ENCODE measurements at regions of chr6 and their contacts with region 1.

Region 1: GRCh38 chr6:47047479-47048407 is 5.6 kb upstream of the ADGRF1 start:
- DNase-seq: peak; percentile 97
- ATAC-seq: peak; percentile 57
- H3K4me3 ChIP-seq: no peak overlapping the region
- H3K27ac ChIP-seq: peak overlapping the region; percentile 95
- H3K4me1 ChIP-seq: peaks cover 54% of the 10 kb centered on the region
- H3K27me3 ChIP-seq: no peaks in the 10 kb centered on the region
- CTCF ChIP-seq: peak; percentile 94

Region 2: DNA sequence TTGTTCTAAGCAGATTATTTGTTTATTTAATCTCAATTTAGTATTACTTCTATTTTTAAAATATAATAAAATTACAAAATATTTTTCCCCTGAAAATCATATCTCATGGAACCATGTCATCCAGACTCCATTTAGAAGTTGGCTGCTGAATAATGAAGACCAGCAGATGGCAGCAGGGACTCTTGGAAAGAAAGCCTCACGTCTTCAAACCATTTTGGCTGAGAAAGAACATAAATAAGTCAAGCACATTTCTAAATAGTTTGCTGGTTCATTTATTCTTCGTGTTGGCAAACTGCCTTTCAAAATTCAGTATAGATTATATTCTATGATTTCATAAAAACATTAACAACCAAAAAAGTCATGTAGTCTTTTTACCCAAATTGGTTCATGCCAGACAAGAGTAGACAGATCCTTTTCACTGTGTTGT is 628.2 kb before region 1 on chr6:
- CTCF ChIA-PET with region 1: no interaction called
- POLR2A ChIA-PET with region 1: no interaction called
- intact Hi-C with region 1: loop called (anchors 10 kb)
- DNase-seq: peak; percentile 83
- ATAC-seq: 0 out of 2 replicates have a peak, but pooled peaks have one; percentile 43
- H3K4me3 ChIP-seq: no peak overlapping the region
- H3K27ac ChIP-seq: no peak overlapping the region
- H3K4me1 ChIP-seq: peaks cover 8% of the 10 kb centered on the region
- H3K27me3 ChIP-seq: peaks cover 6% of the 10 kb centered on the region; the same call in 1 of the 2 replicates
- CTCF ChIP-seq: peak; percentile 76

Region 3: DNA sequence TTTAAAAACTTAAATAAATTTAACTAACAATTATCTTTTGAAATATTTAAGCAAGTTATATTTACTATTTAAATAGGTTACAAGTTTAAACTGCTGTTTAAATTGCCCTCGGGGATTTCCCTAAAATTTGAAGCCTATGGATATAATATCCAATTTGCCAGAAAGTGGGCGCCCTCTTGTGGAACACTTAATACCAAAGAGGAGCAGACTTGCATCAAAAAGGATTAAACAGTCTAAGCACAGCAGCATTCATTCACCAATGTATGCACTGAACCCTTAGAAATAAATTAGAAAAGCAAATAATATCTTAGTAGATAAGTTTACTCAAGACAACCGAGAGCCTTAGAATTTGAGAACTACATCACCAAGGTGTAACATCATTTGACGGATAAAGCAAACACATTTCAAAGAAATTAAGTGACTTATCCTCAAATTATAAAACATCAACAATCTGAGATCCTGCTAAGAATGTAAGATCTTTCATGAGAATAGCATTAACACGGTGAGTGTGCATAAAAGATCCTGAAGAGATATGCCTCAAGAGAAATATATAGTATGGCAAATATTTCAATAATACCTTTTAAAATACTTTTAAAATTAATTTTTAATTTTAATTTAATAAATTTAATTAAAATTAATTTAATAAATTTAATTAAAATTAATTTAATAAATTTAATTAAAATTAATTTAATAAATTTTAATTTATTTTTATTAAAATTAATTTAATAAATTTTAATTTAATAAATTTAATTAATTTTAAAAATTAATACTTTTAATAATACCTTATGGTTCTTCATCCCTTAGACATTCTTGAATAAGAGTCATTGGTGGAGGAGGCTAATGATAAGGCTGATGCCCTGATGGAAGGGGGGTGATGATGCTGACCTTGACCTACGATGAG is 266.0 kb before region 1 on chr6:
- CTCF ChIA-PET with region 1: no interaction called
- POLR2A ChIA-PET with region 1: no interaction called
- intact Hi-C with region 1: loop called (anchors 1 kb)
- DNase-seq: peak; percentile 87
- ATAC-seq: peak; percentile 88
- H3K4me3 ChIP-seq: no peak overlapping the region
- H3K27ac ChIP-seq: no peak overlapping the region
- H3K4me1 ChIP-seq: no peaks in the 10 kb centered on the region
- H3K27me3 ChIP-seq: no peaks in the 10 kb centered on the region
- CTCF ChIP-seq: peak; percentile 86

Region 4: DNA sequence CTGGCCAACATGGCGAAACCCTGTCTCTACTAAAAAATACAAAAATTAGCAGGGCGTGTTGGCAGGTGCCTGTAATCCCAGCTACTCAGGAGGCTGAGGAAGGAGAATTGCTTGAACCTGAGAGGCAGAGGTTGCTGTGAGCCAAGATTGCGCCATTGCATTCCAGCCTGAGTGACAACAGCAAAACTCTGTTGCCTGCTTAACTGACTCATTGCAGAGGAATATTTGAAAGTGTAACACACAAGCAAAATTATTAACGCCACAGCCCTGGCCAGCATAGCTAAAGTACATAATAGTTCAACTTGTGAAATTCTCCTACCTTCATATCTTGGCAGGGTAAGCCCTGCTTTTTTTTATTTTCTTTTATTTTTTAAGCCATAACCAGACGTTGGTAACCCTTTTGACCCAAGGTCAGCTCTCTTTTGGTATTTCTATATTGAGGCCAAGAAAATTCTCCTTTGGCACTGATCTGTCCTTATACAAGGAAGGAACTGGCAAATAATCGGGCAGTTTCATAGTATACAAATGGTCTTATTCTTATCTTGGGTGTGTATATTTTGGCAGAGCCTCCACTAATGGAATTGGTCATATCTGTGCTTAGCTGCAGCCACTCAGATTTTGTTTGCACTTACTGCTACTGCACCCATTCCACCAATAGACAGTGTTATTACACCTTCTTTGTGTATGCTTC is 122.0 kb before region 1 on chr6:
- CTCF ChIA-PET with region 1: no interaction called
- POLR2A ChIA-PET with region 1: no interaction called
- intact Hi-C with region 1: loop called (anchors 5 kb)
- DNase-seq: peak; percentile 91
- ATAC-seq: peak; percentile 80
- H3K4me3 ChIP-seq: peak overlapping the region; percentile 14; the same call in 1 of the 2 replicates
- H3K27ac ChIP-seq: peak overlapping the region; percentile 97
- H3K4me1 ChIP-seq: peaks cover 42% of the 10 kb centered on the region
- H3K27me3 ChIP-seq: no peaks in the 10 kb centered on the region
- CTCF ChIP-seq: no peak

Region 5: DNA sequence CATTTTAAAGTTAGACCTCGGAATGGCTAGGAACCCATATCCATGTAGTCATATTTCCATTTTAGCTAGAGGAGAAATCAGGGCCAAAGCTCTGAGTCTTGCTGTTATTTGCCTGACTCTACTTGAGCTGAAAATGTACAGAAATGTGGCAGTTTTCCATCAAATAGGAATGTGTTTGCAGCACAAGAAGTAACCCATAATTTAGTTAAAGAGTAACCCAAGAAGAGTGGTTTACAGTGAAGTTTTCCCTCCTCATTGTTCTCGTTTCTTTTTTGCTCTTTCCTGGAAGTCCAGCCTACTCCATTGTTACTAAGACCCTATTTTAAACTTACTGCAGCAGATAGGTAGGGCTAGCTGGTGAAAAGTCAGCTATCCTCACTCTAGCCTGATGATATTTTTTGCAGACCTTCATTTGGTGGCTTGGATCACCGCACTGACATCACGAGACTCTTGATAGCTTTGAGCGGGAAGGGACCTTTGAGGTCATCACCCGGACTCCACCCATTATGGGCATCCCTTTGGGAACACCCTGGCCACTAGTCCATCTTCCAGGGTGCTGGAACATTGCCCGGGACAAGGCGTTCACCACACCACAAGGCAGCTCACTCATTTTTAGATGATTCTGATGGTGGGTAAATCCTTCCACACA is 98.0 kb before region 1 on chr6:
- CTCF ChIA-PET with region 1: no interaction called
- POLR2A ChIA-PET with region 1: no interaction called
- intact Hi-C with region 1: no loop called
- DNase-seq: no peak
- ATAC-seq: no peak
- H3K4me3 ChIP-seq: no peak overlapping the region
- H3K27ac ChIP-seq: no peak overlapping the region
- H3K4me1 ChIP-seq: no peaks in the 10 kb centered on the region
- H3K27me3 ChIP-seq: no peaks in the 10 kb centered on the region
- CTCF ChIP-seq: no peak

Region 6: GRCh38 chr6:47103931-47104330 is 56.2 kb after region 1 on chr6:
- CTCF ChIA-PET with region 1: no interaction called
- POLR2A ChIA-PET with region 1: no interaction called
- intact Hi-C with region 1: no loop called
- DNase-seq: peak; percentile 42
- ATAC-seq: peak; percentile 29; the same call in 1 of the 2 replicates
- H3K4me3 ChIP-seq: no peak overlapping the region
- H3K27ac ChIP-seq: peak overlapping the region; percentile 22
- H3K4me1 ChIP-seq: peaks cover 16% of the 10 kb centered on the region
- H3K27me3 ChIP-seq: no peaks in the 10 kb centered on the region
- CTCF ChIP-seq: no peak

Region 7: GRCh38 chr6:47174502-47175023 is 126.8 kb after region 1 on chr6:
- CTCF ChIA-PET with region 1: no interaction called
- POLR2A ChIA-PET with region 1: no interaction called
- intact Hi-C with region 1: no loop called
- DNase-seq: peak; percentile 91
- ATAC-seq: peak; percentile 95
- H3K4me3 ChIP-seq: no peak overlapping the region
- H3K27ac ChIP-seq: peak overlapping the region; percentile 75
- H3K4me1 ChIP-seq: peaks cover 42% of the 10 kb centered on the region
- H3K27me3 ChIP-seq: no peaks in the 10 kb centered on the region
- CTCF ChIP-seq: no peak

Region 8: DNA sequence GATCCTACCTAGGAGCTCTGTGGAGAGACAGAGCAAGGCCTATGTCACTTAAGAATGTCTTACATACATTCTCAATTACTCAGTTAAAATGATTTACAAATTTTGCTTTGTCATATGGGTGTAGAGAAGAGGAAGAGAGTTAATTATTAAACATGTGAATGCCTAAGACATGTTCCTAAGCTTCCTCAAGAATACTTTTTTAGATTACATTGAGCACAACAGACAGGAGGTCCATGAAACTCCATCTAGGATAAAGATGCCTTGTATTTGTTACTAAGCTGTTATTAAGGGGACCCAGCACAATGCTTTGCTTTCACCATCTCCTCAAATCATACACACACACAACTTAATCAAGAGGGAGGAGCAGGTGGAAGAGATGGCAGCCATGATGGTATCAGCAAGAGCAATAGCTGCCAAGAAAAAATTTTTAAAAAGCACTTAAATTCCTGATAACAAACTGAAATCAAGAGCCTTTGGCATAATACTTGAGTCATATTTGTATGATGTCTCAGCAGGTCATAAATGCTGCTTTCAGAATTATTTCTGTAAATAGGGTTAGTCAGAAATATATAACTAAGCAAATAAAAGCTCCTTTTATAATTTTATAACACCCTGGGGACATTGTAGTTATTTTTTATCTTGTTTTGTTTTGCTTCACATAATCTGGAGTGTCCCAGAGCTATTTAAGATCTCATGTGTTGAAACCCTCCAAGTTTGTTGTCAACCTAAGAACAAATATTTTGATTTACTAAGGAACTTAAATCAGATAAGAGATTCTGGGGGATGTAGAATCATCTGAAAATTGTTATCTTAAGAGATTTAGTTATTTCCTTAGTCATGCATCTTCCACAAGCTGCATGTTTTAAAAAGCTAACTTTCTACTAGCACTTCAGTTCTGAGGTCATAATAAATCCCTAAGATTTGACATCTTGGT is 359.9 kb after region 1 on chr6:
- CTCF ChIA-PET with region 1: no interaction called
- POLR2A ChIA-PET with region 1: interaction called, 6 read pairs
- intact Hi-C with region 1: loop called (anchors 10 kb)
- DNase-seq: peak; percentile 95
- ATAC-seq: peak; percentile 63
- H3K4me3 ChIP-seq: no peak overlapping the region
- H3K27ac ChIP-seq: peak overlapping the region; percentile 95
- H3K4me1 ChIP-seq: peaks cover 51% of the 10 kb centered on the region
- H3K27me3 ChIP-seq: no peaks in the 10 kb centered on the region
- CTCF ChIP-seq: no peak

Measured in PC-3 (cell line).